ENCODE measurements at regions of chr22 and their contacts with region 1.

Region 1: GRCh38 chr22:23225724-23226496 is 45.6 kb downstream of the BCR start:
- DNase-seq: no peak
- H3K4me3 ChIP-seq: peak overlapping the region in 2 of 3 experiments; percentile 33 to 52
- H3K27ac ChIP-seq: peak overlapping the region; percentile 81
- H3K4me1 ChIP-seq: peaks cover 51% of the 10 kb centered on the region
- H3K27me3 ChIP-seq: no peaks in the 10 kb centered on the region
- CTCF ChIP-seq: no peak

Region 2: GRCh38 chr22:23187871-23188700 is 37.8 kb before region 1 on chr22:
- dilution Hi-C with region 1: loop called (anchors 5 kb)
- DNase-seq: no peak
- H3K4me3 ChIP-seq: no peak overlapping the region
- H3K27ac ChIP-seq: no peak overlapping the region
- H3K4me1 ChIP-seq: peaks cover 11% of the 10 kb centered on the region
- H3K27me3 ChIP-seq: no peaks in the 10 kb centered on the region
- CTCF ChIP-seq: no peak

Measured in keratinocyte (primary cell).